ENCODE measurements at regions of chr4 and their contacts with region 1.

Region 1: DNA sequence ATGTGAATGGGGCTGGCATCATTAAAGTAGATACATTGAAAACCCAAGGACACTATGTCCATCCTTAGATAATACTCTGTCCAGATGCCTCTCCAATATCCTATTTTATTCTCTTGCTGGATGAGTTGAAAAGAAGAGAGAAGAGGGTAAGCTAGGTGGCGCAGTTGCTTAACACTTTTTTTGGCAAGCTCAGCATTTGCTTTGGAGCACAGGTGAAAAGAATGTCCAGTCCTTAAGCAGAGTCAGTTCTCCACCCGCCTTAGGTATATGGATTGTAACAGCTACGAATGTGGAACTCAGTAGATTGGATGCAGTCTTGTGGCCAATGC is 208.4 kb downstream of the NWD2 start:
- DNase-seq: peak in 7 of 9 donors; percentile 21 to 57 (median 46)
- ATAC-seq: peak; percentile 64
- H3K4me3 ChIP-seq: peak overlapping the region; percentile 66
- H3K4me3 Mint-ChIP-seq: peak overlapping the region; percentile 79 to 89 (median 86)
- H3K27ac ChIP-seq: no peak overlapping the region
- H3K27ac Mint-ChIP-seq: peak overlapping the region in 2 of 9 donors; percentile 18 to 38
- H3K4me1 ChIP-seq: peaks cover 0 to 14% of the 10 kb centered on the region in 2 donors
- H3K4me1 Mint-ChIP-seq: peaks cover 0 to 18% (median 14%) of the 10 kb centered on the region in 7 donors
- H3K27me3 ChIP-seq: peaks cover 0 to 4% of the 10 kb centered on the region in 2 donors
- H3K27me3 Mint-ChIP-seq: peaks cover 31 to 80% (median 61%) of the 10 kb centered on the region in 5 donors

Region 2: DNA sequence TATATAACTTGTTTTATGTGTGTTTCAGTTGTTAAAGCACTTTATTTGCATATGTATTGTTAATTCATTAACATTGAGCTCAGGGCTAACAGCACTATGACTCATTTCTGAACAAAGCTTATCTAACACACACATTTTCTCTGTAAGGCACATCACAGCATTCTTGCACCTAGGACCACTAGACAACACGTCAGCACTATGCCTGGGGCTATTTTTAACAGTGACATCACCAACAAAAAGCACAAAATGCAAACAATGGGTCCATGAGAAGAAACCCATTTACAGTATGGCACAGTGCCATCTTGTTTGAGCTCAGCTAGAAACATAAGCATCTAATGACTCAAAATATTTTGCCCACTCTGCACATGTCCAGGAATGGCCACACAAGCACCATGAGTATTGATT is 108.9 kb after region 1 on chr4:
- CTCF ChIA-PET with region 1: interaction called, 20 read pairs
- POLR2A ChIA-PET with region 1: no interaction called
- intact Hi-C with region 1: loop called (anchors 1 kb)
- DNase-seq: no peak
- ATAC-seq: no peak
- H3K4me3 ChIP-seq: no peak overlapping the region
- H3K4me3 Mint-ChIP-seq: no peak overlapping the region
- H3K27ac ChIP-seq: no peak overlapping the region
- H3K27ac Mint-ChIP-seq: no peak overlapping the region
- H3K4me1 ChIP-seq: no peaks in the 10 kb centered on the region
- H3K4me1 Mint-ChIP-seq: no peaks in the 10 kb centered on the region
- H3K27me3 ChIP-seq: no peaks in the 10 kb centered on the region
- H3K27me3 Mint-ChIP-seq: peaks cover 0 to 5% (median 3%) of the 10 kb centered on the region in 5 donors

Region 3: GRCh38 chr4:37568481-37568880 is 115.6 kb after region 1 on chr4:
- CTCF ChIA-PET with region 1: interaction called, 20 read pairs
- POLR2A ChIA-PET with region 1: no interaction called
- intact Hi-C with region 1: loop called (anchors 1 kb)
- DNase-seq: no peak
- ATAC-seq: no peak
- H3K4me3 ChIP-seq: no peak overlapping the region
- H3K4me3 Mint-ChIP-seq: no peak overlapping the region
- H3K27ac ChIP-seq: no peak overlapping the region
- H3K27ac Mint-ChIP-seq: peak overlapping the region in 1 of 9 donors; percentile 74
- H3K4me1 ChIP-seq: no peaks in the 10 kb centered on the region
- H3K4me1 Mint-ChIP-seq: peaks cover 0 to 3% (median 0%) of the 10 kb centered on the region in 7 donors
- H3K27me3 ChIP-seq: no peaks in the 10 kb centered on the region
- H3K27me3 Mint-ChIP-seq: peaks cover 0 to 3% (median 0%) of the 10 kb centered on the region in 5 donors

Region 4: DNA sequence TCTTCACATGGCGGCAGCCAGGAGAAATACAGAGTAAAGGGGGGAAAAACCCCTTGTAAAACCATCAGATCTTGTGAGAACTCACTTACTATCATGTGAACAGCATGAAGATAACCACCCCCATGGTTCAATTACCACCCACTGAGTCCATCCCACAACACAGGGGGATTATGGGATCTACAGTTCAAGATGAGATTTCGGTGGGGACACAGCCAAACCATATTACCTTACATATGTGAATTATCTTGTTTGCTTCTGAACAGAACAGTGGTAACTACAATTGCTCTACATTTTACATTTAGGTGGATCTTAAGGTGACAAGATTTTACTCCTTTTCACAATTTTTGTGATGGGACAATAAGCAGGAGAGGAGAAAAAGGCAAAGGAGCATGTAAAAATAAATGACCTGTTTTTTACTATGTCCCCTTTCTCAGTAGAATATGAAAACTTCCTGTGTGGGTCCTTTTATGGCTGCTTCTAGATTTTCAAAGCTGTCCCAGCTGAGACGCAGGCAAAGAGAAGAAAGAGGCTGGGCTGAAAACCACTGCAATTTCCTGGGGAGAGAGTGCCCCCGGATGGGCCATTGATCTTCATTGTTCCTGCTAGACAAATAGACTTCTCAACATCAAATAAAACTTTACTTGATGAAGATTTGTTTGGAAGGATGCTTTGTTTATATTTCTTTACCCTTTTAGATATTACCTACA is 327.7 kb after region 1 on chr4:
- CTCF ChIA-PET with region 1: no interaction called
- POLR2A ChIA-PET with region 1: no interaction called
- intact Hi-C with region 1: loop called in 1 of 2 experiments (anchors 1 kb)
- DNase-seq: peak; percentile 20 to 90 (median 83)
- ATAC-seq: peak; percentile 96
- H3K4me3 ChIP-seq: peak overlapping the region; percentile 25
- H3K4me3 Mint-ChIP-seq: peak overlapping the region; percentile 19 to 84 (median 62)
- H3K27ac ChIP-seq: peak overlapping the region; percentile 59
- H3K27ac Mint-ChIP-seq: peak overlapping the region; percentile 32 to 96 (median 92)
- H3K4me1 ChIP-seq: peaks cover 12 to 27% of the 10 kb centered on the region in 2 donors
- H3K4me1 Mint-ChIP-seq: peaks cover 11 to 45% (median 28%) of the 10 kb centered on the region in 7 donors
- H3K27me3 ChIP-seq: no peaks in the 10 kb centered on the region
- H3K27me3 Mint-ChIP-seq: peaks cover 0 to 3% (median 0%) of the 10 kb centered on the region in 5 donors

Region 5: DNA sequence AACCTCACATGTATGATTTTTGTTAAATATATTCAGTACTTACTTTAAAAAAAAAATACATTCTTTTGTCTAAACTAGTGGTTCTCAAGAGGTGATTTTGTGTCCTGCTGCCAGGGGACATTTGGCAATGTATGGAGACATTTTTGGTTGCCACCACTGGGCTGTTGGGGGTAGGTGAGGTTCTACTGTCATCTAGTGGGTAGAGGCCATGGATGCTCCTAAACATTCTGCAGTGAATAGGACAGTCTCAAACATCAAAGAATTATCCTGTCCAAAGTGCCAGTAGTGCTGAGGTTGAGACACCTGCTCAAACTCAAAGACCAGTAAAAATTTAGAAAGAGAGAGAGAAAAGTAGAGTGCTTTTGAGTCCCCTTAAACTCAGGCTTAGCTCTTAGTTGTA is 340.6 kb after region 1 on chr4:
- CTCF ChIA-PET with region 1: interaction called, 3 read pairs
- POLR2A ChIA-PET with region 1: no interaction called
- intact Hi-C with region 1: loop called (anchors 1 to 2 kb)
- DNase-seq: peak in 5 of 9 donors; percentile 33 to 44 (median 39)
- ATAC-seq: peak; percentile 80
- H3K4me3 ChIP-seq: no peak overlapping the region
- H3K4me3 Mint-ChIP-seq: no peak overlapping the region
- H3K27ac ChIP-seq: no peak overlapping the region
- H3K27ac Mint-ChIP-seq: peak overlapping the region in 1 of 9 donors; percentile 49
- H3K4me1 ChIP-seq: no peaks in the 10 kb centered on the region
- H3K4me1 Mint-ChIP-seq: peaks cover 0 to 3% (median under 1%) of the 10 kb centered on the region in 7 donors
- H3K27me3 ChIP-seq: no peaks in the 10 kb centered on the region
- H3K27me3 Mint-ChIP-seq: peaks cover 0 to 22% (median 0%) of the 10 kb centered on the region in 5 donors

Region 6: DNA sequence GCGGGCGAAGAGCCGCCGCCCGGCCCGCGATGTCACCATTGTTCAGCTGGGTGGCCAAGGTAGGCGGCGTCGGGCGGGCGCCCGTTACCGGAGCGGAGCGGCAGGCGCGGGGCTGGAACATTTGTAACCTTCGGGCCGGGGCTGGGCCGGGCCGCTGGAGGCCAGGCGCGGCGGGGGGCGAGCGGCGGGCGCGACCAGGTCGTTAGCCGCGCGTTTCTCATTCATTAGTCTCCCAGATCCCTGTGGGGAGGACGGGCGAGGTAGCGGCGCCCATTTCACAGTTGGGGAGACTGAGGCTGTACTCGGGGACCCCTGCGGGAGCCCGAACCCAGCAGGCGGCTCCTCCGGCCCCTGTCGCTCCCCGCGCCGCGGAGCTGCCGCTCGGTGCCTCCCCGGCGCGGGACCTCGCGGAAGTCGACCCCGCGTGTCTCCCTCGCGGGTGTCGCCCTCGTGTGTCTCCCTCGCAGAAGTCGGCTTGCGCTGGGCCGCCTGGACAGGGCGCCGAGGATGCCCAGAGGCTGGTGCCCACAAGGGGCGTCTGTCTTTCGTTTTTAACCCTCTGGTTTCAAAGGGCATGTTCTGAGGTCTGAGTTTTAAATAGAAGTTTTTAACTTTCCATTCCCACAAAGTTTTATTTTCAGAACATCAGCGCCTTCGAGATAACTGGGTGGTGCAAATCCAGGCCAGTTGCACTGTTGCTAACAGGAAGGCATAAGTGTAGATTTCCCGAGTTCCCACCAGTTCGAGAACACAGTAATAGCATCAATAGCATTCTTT is 524.7 kb after region 1 on chr4:
- CTCF ChIA-PET with region 1: no interaction called
- POLR2A ChIA-PET with region 1: no interaction called
- intact Hi-C with region 1: loop called in 1 of 2 experiments (anchors 1 kb)
- DNase-seq: peak; percentile 56 to 75 (median 70)
- ATAC-seq: peak; percentile 87
- H3K4me3 ChIP-seq: peak overlapping the region; percentile 69
- H3K4me3 Mint-ChIP-seq: peak overlapping the region; percentile 74 to 91 (median 84)
- H3K27ac ChIP-seq: peak overlapping the region; percentile 85
- H3K27ac Mint-ChIP-seq: peak overlapping the region; percentile 51 to 90 (median 78)
- H3K4me1 ChIP-seq: peaks cover 9 to 13% of the 10 kb centered on the region in 2 donors
- H3K4me1 Mint-ChIP-seq: peaks cover 14 to 40% (median 34%) of the 10 kb centered on the region in 7 donors
- H3K27me3 ChIP-seq: no peaks in the 10 kb centered on the region
- H3K27me3 Mint-ChIP-seq: no peaks in the 10 kb centered on the region

Region 7: DNA sequence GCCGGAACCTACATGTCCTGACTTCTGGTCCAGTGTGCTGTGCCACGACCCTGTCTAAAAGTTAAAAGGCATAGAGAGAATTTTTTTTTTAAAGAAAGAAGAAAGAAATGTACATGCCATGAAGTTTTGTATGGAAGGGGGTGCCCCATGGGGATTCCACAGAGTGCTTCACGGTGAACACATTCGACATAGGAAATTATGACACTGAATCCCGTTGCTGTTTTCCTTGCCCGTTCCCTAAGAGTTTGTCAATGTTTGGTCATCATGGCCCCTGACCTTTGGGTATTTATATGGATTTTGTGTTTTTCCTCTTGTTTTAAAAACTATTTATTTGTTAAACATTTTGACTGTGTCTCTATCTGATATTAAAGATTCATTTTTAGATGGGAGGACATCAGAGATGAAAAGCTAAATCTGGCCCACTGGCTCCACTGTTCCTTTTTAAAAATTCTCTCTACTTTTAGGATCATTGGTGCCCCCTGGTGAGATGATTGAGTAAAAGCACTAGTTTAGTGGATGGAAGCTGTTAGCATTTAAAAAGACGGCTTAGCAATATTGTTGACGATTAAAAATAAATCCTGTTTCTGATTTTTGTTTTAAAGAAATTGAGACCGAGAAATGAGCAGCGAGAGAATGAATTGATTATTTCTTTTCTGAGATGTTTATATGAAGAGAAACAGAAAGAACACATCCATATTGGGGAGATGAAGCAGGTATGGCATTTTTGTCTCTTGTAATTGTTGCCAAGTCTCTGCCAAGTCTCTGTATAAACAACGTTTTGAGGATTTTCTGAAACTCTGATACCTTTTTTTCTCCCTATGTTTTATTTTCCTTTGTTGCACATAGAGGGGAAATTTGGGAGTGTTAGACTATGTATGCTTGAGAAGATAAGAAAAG is 582.3 kb after region 1 on chr4:
- CTCF ChIA-PET with region 1: no interaction called
- POLR2A ChIA-PET with region 1: no interaction called
- intact Hi-C with region 1: loop called (anchors 1 to 2 kb)
- DNase-seq: peak in 7 of 9 donors; percentile 29 to 66 (median 53)
- ATAC-seq: peak; percentile 68
- H3K4me3 ChIP-seq: no peak overlapping the region
- H3K4me3 Mint-ChIP-seq: no peak overlapping the region
- H3K27ac ChIP-seq: no peak overlapping the region
- H3K27ac Mint-ChIP-seq: no peak overlapping the region
- H3K4me1 ChIP-seq: no peaks in the 10 kb centered on the region
- H3K4me1 Mint-ChIP-seq: peaks cover 0 to 6% (median 0%) of the 10 kb centered on the region in 7 donors
- H3K27me3 ChIP-seq: no peaks in the 10 kb centered on the region
- H3K27me3 Mint-ChIP-seq: no peaks in the 10 kb centered on the region

Measured in naive thymus-derived CD4-positive, alpha-beta T cell (primary cell).